ENCODE measurements at regions of chr2 and their contacts with region 1.

Region 1: GRCh38 chr2:221610675-221611074 is 38.6 kb upstream of the EPHA4 start:
- DNase-seq: no peak
- H3K4me3 ChIP-seq: no peak overlapping the region
- H3K27ac ChIP-seq: no peak overlapping the region
- H3K4me1 ChIP-seq: no peaks in the 10 kb centered on the region
- H3K27me3 ChIP-seq: no peaks in the 10 kb centered on the region
- CTCF ChIP-seq: no peak

Region 2: DNA sequence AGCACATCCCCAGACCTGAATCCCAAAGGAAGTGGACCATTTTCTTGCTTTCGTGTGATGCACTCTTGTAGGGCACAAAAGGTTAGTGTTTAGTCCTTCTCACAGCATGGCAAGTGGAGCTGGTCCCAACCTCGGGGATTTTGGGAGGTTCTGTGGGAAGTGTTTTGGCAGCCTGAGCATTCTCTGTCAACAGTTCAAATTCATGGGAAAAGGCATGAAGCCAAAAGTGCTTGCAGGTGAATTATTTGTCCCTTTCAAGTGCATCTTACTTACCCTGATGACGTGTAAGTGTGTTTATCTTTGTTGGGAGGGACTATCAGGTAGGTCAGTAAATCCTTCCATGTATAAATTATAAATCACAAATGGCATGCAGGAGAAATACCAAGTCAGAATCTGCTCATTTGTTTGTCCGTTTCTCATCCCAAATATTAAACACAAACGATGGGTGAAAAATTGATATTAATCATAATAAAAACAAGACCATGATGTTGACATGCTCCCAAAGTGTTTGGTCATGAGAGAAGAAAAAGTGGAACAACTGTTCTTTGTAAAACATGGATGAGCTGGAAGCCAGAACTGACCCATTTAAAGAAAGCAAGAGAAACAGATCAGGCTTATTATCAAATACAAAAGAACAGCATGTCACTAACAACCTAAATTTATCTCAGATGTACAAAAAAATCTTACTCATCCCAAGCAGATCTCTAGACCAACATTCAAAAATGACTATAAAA is 96.2 kb before region 1 on chr2:
- CTCF ChIA-PET with region 1: no interaction called
- POLR2A ChIA-PET with region 1: no interaction called
- intact Hi-C with region 1: no loop called
- DNase-seq: no peak
- H3K4me3 ChIP-seq: no peak overlapping the region
- H3K27ac ChIP-seq: no peak overlapping the region
- H3K4me1 ChIP-seq: peaks cover 23% of the 10 kb centered on the region
- H3K27me3 ChIP-seq: no peaks in the 10 kb centered on the region
- CTCF ChIP-seq: no peak

Region 3: DNA sequence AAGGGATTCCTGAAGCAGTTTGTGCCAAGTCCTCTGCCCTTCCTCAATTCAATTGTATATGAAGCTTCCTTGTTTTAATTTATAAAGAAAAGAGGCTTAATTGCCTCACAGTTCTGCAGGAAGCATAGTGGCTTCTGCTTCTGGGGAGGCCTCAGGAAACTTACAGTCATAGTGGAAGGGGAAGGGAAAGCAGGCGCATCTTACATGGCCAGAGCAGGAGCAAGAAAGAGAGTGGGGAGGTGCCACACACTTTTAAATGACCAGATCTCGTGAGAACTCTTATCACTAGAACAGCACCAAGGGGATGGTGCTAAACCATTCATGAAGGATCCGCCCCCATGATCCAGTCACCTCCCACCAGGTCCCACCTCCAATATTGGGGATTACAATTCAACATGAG is 927.9 kb after region 1 on chr2:
- CTCF ChIA-PET with region 1: no interaction called
- POLR2A ChIA-PET with region 1: interaction called, 10 read pairs
- intact Hi-C with region 1: no loop called
- DNase-seq: no peak
- H3K4me3 ChIP-seq: no peak overlapping the region
- H3K27ac ChIP-seq: no peak overlapping the region
- H3K4me1 ChIP-seq: no peaks in the 10 kb centered on the region
- H3K27me3 ChIP-seq: no peaks in the 10 kb centered on the region
- CTCF ChIP-seq: no peak

Measured in A673 (cell line).